ENCODE measurements at regions of chr1 and their contacts with region 1.

Region 1: DNA sequence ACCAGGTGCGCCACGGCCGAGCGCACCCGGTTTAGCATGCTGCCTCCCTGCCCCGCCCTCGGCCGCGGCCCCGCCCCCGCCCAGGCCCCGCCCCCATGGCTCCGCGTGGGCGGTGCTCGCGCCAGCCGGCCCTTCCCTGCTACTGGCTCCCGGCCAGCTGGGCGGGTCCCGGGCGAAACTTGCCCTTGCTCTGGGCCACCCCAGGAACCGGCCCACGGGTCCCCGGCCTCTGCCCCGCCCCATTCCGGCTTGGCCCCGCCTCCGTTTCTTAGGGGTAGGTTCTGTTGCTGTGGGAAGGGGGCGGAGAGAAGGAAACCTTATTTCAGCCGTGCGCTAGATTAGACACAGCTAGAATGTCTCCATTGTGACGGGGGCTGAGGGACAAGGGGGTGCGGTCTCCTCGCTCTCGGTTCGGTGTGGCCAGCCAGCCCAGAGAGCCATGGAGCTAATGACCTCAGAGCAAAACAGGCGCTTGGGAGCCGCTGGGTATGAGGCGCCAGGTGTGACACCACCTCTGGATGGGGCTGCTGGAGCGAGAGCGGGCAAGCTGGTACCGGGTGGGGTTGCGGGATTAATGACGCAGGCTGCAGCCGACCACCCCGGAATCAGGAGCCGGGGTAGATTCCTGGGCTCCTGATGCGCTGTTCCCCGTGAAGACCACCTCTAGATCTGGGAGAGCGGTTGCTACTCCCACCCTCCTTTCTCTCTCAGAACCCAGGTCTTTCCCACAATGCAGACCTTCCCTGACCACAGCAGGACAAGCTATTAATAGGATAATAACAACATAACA is at the start of gene PPM1J:
- DNase-seq: peak; percentile 98
- H3K4me3 Mint-ChIP-seq: peak within 1 kb of the TSS; percentile 78
- H3K27ac Mint-ChIP-seq: no peak within 1 kb of the TSS
- H3K4me1 Mint-ChIP-seq: peaks cover 11% of the 10 kb centered on the region
- H3K27me3 Mint-ChIP-seq: peaks cover 11% of the 10 kb centered on the region
- total RNA-seq, gene PPM1J: 0.69 to 1.2 TPM

Region 2: GRCh38 chr1:112501810-112502641 is 213.4 kb before region 1 on chr1:
- CTCF ChIA-PET with region 1: interaction called, 43 read pairs
- POLR2A ChIA-PET with region 1: no interaction called
- intact Hi-C with region 1: no loop called
- DNase-seq: peak; percentile 70
- H3K4me3 Mint-ChIP-seq: peak overlapping the region; percentile 10
- H3K27ac Mint-ChIP-seq: no peak overlapping the region
- H3K4me1 Mint-ChIP-seq: peaks cover 6% of the 10 kb centered on the region
- H3K27me3 Mint-ChIP-seq: peaks cover 51% of the 10 kb centered on the region

Region 3: DNA sequence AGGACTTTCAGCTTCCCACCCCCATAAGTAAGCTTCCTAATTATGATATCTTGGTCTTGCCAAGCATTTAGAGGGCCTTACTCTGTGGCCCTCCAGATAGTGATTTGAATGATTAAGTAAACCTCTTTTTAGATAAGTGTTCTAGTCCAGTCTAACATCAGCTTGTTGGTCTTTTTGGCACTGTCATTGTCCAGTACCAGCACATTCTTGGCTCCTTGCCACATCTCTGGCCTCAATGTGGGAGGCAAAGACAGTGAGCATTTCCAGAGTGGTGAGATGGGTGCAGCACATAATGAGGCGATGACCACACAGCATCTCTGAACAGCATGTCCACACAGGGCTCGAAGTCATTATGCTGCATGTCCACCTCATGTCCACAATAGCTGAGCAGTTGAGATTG is 89.8 kb before region 1 on chr1:
- CTCF ChIA-PET with region 1: no interaction called
- POLR2A ChIA-PET with region 1: no interaction called
- intact Hi-C with region 1: no loop called
- DNase-seq: no peak
- H3K4me3 Mint-ChIP-seq: no peak overlapping the region
- H3K27ac Mint-ChIP-seq: no peak overlapping the region
- H3K4me1 Mint-ChIP-seq: peaks cover 70% of the 10 kb centered on the region
- H3K27me3 Mint-ChIP-seq: no peaks in the 10 kb centered on the region

Region 4: DNA sequence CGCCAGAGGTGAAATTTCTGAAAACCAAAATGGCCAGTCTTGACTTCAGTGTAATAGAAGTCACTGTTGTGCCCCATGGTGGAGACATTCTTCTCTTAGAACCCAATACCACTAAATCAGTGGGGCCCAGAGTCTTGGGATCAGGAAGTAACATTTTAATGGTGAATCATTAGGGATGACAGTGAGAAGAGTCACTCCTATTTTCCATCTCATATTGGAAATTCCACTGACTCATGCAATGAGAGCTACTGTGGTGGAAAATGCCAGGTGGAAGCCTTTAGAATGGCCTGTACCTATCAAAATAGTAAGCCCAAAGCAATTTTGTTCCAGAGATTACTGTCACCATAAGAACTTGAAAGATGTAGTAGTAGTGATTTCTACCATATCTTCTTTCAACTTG is 20.3 kb after region 1 on chr1:
- CTCF ChIA-PET with region 1: interaction called, 17 read pairs
- POLR2A ChIA-PET with region 1: interaction called, 4 read pairs
- intact Hi-C with region 1: no loop called
- DNase-seq: peak; percentile 23
- H3K4me3 Mint-ChIP-seq: no peak overlapping the region
- H3K27ac Mint-ChIP-seq: peak overlapping the region; percentile 34
- H3K4me1 Mint-ChIP-seq: peaks cover 16% of the 10 kb centered on the region
- H3K27me3 Mint-ChIP-seq: peaks cover 18% of the 10 kb centered on the region

Region 5: DNA sequence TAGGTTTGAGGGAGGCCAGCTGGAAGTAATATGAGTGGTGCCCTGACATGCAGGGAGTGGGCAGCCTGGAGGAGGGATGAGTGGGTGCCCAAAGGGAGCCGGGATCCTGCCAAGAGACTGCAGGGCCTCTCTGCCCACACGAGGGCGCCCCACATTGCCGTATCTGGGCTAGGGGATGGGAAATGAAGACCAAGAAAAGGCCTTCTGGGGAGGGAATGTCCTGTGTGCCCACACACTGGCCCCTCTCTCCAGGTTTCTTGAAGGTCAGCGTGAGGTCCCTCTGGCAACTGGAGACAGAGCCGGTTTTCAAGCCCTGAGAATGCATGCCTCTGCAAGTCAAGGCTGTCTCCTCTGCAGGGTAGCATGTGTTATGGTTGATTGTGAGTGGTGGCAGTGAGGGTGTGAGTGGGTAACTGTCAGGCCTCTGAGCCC is 93.8 kb after region 1 on chr1:
- CTCF ChIA-PET with region 1: interaction called, 354 read pairs
- POLR2A ChIA-PET with region 1: no interaction called
- intact Hi-C with region 1: loop called (anchors 1 kb)
- DNase-seq: peak; percentile 81
- H3K4me3 Mint-ChIP-seq: no peak overlapping the region
- H3K27ac Mint-ChIP-seq: no peak overlapping the region
- H3K4me1 Mint-ChIP-seq: peaks cover 2% of the 10 kb centered on the region
- H3K27me3 Mint-ChIP-seq: no peaks in the 10 kb centered on the region

Region 6: DNA sequence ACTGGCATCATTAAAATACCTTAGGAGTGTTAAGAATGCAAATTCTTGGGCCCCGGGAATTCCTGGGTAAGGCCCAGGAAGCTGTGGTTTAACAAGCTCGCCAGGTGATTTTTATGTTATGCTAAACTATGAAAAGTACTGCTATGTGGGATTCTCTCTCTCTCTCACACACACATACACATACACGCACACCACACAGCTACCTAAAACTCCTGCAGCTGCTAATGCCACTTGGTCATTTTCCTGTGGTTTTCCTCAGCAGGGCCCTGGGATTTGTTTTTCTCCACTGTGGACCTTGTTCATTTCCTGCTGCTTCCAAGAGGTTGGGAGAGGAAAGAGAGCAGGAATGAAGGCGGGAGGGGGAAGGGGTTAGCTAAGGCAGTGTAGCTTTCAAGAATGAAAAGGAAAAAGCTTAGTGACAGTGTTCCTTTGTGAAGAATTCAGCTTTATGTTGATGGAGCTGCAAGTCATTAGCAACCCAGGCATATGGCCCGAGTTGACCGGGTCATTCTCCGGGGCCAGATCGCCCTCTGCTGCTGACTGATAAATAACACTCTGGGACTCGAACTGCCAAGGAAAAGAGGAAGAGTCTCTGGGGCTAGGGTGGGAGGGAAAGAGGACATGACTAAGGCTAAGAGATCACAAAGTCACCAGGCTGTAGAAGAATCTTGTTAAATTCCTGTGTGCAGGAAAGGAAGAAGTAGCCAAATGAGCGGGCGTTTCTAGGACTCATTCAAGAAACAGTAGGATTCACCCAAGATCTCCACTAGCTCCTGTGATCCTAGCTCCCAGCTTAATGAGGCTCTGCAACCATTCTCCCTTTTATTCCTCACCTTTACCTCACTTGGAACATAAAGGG is 327.1 kb after region 1 on chr1:
- CTCF ChIA-PET with region 1: interaction called, 19 read pairs
- POLR2A ChIA-PET with region 1: no interaction called
- intact Hi-C with region 1: loop called (anchors 10 kb)
- DNase-seq: peak; percentile 55
- H3K4me3 Mint-ChIP-seq: no peak overlapping the region
- H3K27ac Mint-ChIP-seq: no peak overlapping the region
- H3K4me1 Mint-ChIP-seq: peaks cover 32% of the 10 kb centered on the region
- H3K27me3 Mint-ChIP-seq: no peaks in the 10 kb centered on the region

Region 7: DNA sequence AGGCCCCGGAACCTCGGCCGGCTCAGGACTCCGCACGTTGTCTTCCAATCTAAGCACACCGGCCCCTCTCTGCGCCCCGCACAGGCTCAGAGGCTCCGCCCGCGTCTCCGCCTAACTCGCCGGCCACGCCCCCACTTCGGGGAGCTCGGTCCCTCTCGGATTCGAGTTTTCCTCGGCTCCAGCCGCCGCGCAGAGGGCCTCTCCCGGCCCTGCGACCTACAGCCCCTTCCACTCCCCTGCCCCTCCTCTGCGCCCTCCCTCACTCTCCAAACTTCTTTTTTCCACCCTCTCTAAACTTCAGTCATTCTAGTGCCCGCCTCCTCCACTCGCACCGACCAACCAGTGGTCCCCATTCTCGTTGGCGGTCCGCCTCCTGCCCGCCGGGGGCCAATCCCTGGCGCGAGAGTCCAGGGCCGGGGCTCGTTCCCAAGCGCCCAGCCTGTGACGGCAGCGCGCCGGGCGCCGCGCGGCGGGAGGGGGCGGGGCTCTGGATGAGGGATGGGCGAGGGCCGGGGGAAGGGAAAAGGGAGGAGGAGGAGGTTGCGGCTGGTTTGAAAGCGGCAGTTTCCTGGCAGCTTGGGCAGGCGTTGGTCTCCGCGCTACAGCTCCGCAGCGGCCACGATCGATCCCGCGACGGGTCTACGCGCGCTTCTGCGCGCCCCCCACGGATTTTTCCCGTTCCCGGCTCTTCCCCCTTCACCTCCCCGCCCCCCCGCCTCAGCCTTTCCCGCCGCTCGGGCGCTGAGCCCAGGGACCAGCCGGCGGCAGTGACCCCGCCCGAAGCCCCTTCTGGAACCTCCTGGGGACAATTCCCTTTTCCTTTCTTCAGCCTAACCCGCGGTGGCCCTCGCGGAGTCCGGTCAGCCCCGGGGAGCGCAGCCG is 674.7 kb after region 1 on chr1 and contains the start of gene MAGI3:
- CTCF ChIA-PET with region 1: interaction called, 3 read pairs
- POLR2A ChIA-PET with region 1: no interaction called
- intact Hi-C with region 1: loop called (anchors 1 kb)
- DNase-seq: peak; percentile 97
- H3K4me3 Mint-ChIP-seq: peak within 1 kb of the TSS; percentile 92
- H3K27ac Mint-ChIP-seq: peak within 1 kb of the TSS; percentile 77
- H3K4me1 Mint-ChIP-seq: peaks cover 24% of the 10 kb centered on the region
- H3K27me3 Mint-ChIP-seq: no peaks in the 10 kb centered on the region
- total RNA-seq, gene MAGI3: 7.3 to 7.4 TPM